ENCODE measurements at regions of chr3 and their contacts with region 1.

Region 1: GRCh38 chr3:170055209-170055608 is 17.4 kb downstream of the GPR160 start:
- DNase-seq: peak; percentile 64
- CTCF ChIP-seq: no peak

Region 2: GRCh38 chr3:169863458-169863899 is 191.7 kb before region 1 on chr3:
- CTCF ChIA-PET with region 1: interaction called, 17 read pairs
- POLR2A ChIA-PET with region 1: no interaction called
- DNase-seq: peak; percentile 66
- CTCF ChIP-seq: peak; percentile 86

Region 3: DNA sequence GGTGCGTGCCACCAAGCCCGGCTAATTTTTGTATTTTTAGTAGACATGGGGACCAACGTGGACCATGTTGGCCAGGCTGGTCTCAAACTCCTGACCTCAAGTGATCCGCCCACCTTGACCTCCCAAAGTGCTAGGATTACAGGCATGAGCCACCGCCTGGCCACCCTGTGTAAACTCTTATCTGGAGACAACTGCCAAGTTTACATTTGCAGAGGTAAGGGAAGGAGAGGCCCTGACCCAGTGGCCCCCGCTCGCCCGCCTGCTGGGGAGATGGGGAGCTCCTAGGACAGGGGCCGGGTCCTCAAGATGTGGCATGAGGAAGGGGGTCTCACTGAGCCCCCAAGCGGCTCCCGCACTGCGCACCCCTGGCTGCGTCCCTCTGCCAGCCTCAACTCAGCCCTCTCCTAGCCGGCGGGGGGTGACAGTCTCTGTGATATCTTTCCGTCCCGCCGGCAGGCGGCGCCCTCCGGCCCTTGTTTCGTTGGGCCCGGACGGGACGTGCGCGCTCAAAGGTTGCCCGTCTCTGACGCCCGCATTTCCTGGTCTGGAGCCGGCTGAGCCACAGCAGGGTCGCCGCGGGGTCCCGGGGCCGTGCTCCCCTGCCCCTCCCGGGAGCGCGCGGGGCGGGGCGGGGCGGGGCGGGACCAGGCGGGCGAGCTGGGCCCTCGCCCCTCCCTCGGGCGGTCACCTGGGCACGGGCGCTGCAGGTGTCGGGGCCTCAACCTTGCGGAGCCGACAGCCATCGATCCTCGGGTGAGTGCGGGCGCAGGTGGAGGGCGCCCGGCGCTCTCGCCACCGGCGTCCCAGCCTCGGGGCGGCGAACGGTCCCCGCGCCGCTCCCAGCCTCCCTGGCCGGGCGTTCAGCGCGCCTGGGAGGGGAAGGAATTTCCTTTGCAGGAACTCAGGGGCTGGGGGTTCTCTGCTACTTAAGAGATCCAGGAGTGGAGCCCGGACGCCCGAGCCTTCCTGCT is 17.5 kb before region 1 on chr3 and contains the start of gene GPR160:
- CTCF ChIA-PET with region 1: interaction called, 24 read pairs
- POLR2A ChIA-PET with region 1: no interaction called
- DNase-seq: peak; percentile 84
- CTCF ChIP-seq: peak; percentile 90

Region 4: GRCh38 chr3:170044795-170045244 is 10.4 kb before region 1 on chr3:
- CTCF ChIA-PET with region 1: interaction called, 28 read pairs
- POLR2A ChIA-PET with region 1: no interaction called
- DNase-seq: peak; percentile 60
- CTCF ChIP-seq: no peak

Region 5: DNA sequence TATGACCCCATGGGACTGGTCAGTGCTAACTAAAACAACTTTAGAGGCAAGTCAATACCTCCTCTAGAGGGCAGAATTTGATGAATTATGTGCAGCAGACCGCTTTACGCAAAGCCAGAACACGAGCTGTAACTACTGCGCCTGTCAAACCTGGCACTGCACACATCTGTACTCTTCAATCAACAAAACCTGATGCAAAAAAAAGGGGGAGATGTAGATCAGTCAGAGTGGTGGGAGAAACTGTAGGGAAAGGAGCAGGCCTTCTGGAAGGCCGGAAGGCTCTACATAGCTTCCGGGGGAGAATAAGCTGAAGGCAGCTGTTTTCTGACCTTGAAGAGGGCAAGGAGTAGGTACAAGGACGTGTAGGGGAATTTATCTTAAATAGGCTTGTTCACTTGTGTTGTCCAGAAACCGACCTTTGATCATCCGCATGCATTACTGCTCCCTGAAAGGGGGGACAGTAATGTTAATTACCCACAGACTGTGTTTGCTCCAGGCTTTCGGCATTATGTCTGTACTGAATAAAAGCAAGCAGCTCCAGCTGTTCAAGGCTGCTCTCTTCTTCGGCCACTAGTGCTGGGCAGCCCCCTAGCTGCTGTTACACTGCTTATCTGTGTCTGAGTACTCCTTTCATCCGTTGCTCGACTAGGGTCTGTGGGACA is 23.5 kb after region 1 on chr3:
- CTCF ChIA-PET with region 1: interaction called, 15 read pairs
- POLR2A ChIA-PET with region 1: no interaction called
- DNase-seq: no peak
- CTCF ChIP-seq: peak; percentile 3

Measured in GM10248 (cell line).